ENCODE measurements at regions of chrX and their contacts with region 1.

Region 1: DNA sequence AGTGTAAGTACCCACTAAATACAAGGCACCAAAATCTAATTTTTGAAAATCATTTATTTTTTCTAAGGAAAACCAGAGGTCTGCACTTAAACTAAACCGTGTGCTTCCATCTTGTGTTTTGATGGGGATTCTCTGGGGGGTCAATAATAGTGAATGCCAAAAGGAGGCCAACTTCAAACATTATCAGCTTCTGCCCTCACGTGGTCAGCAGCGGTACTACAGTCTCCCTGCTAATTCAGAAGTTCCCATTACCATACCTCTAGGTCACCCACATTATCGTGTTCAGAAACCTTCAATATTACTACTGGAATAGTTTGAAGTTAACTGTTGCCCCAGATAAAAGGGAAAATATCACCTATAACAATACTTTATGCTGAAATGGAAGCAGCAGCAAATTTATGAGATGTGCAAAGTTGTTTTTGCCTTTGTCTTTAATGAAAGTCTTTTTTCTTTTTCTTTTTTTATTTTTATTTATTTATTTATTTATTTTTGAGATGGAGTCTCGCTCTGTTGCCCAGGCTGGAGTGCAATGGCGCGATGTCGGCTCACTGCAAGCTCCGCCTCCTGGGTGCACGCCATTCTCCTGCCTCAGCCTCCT is 17.3 kb downstream of the CTPS2 start:
- DNase-seq: peak; percentile 54
- H3K4me3 ChIP-seq: no peak overlapping the region
- H3K27ac ChIP-seq: no peak overlapping the region
- H3K4me1 ChIP-seq: no peaks in the 10 kb centered on the region
- CTCF ChIP-seq: peak; percentile 83

Region 2: DNA sequence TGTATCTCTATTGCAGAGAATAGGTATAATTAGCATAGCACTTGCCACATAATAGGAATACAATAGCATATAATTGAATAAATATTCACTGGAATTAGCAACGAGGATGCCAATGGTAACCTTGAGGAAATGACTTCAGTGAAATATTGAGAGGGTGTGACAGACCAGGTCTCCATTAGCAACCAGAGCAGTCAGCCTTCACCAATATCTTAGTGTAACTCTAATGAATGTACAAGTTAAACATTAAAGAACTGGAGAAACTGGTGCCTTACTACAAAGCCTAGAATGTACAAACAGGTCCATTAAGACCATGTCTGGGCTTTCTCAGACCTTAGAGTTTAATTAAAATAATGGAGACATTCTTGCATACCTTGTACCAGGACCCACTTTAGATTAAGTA is 384.9 kb before region 1 on chrX:
- CTCF ChIA-PET with region 1: no interaction called
- POLR2A ChIA-PET with region 1: no interaction called
- intact Hi-C with region 1: no loop called
- DNase-seq: no peak
- H3K4me3 ChIP-seq: no peak overlapping the region
- H3K27ac ChIP-seq: no peak overlapping the region
- H3K4me1 ChIP-seq: no peaks in the 10 kb centered on the region
- CTCF ChIP-seq: no peak

Region 3: GRCh38 chrX:16436348-16437188 is 258.6 kb before region 1 on chrX:
- CTCF ChIA-PET with region 1: interaction called, 3 read pairs
- POLR2A ChIA-PET with region 1: no interaction called
- intact Hi-C with region 1: loop called (anchors 10 kb)
- DNase-seq: peak; percentile 50
- H3K4me3 ChIP-seq: no peak overlapping the region
- H3K27ac ChIP-seq: no peak overlapping the region
- H3K4me1 ChIP-seq: no peaks in the 10 kb centered on the region
- CTCF ChIP-seq: peak; percentile 80